H1 (cell line): ENCODE measurements at regions of chr11 and their contacts with region 1.

Region 1: GRCh38 chr11:110463153-110463552 is 33.4 kb downstream of the FDX1 start:
- DNase-seq: peak; percentile 17 to 65
- H3K4me3 ChIP-seq: no peak overlapping the region
- H3K27ac ChIP-seq: no peak overlapping the region
- H3K4me1 ChIP-seq: no peaks in the 10 kb centered on the region
- H3K27me3 ChIP-seq: no peaks in the 10 kb centered on the region
- CTCF ChIP-seq: peak; percentile 63 to 80 (median 76)
- EP300 ChIP-seq: no peak
- POLR2A ChIP-seq: no peak
- RAD21 ChIP-seq: peak; percentile 82 to 87

Region 2: DNA sequence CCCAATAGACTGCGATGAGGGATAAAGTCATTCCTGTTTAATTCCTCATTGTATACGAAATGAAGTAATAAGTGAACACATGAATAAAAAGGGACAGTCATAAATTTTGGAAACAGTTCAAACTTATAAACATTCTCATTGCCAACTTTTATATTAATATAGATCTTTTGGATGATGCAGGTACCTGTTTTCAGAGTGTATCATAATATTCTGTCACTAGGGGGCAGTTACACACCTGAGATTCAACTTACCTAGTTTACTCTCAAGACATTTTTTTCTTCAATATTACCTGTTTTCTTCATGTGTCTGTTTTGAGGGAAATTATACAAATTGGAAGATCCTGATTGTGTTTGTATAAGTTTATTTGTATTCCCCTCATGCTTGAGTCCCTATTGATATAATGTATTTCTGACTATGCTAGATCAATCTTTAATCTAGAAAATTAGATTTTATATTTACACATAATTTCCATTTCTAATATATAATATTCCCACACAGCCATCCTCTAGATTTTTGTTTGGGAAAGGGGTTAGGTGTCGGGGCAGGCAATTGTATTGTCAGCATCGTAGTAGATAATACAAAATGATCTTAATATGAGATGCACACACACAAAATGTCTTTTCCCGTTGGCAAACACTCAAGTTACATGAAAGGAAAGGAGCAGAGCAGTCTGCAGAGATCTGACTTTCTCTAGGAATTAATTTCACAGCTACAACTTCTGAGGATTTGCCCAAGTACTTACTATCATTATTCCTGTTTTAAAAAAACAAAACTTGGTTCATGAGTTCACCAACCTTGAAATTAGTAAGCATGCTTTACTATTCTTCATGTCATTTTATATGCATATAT is 15.0 kb before region 1 on chr11:
- CTCF ChIA-PET with region 1: interaction called, 13 read pairs
- POLR2A ChIA-PET with region 1: no interaction called
- DNase-seq: no peak
- H3K4me3 ChIP-seq: no peak overlapping the region
- H3K27ac ChIP-seq: no peak overlapping the region
- H3K4me1 ChIP-seq: no peaks in the 10 kb centered on the region
- H3K27me3 ChIP-seq: no peaks in the 10 kb centered on the region
- CTCF ChIP-seq: peak in 2 of 3 experiments; percentile 24 to 30; a peak in 2 of 4 replicates
- EP300 ChIP-seq: no peak
- POLR2A ChIP-seq: no peak
- RAD21 ChIP-seq: peak in 1 of 2 experiments; percentile 51

Region 3: GRCh38 chr11:111230122-111230465 is 766.9 kb after region 1 on chr11:
- CTCF ChIA-PET with region 1: interaction called, 14 read pairs
- POLR2A ChIA-PET with region 1: no interaction called
- DNase-seq: no peak
- H3K4me3 ChIP-seq: no peak overlapping the region
- H3K27ac ChIP-seq: no peak overlapping the region
- H3K4me1 ChIP-seq: no peaks in the 10 kb centered on the region
- H3K27me3 ChIP-seq: no peaks in the 10 kb centered on the region
- CTCF ChIP-seq: no peak
- EP300 ChIP-seq: no peak
- POLR2A ChIP-seq: no peak
- RAD21 ChIP-seq: no peak